PC-9 (cell line): ENCODE measurements at regions of chrX and their contacts with region 1.

Region 1: GRCh38 chrX:129522184-129523078 is 859 bp downstream of the SMARCA1 start:
- DNase-seq: peak; percentile 79 to 88
- H3K4me3 ChIP-seq: peak overlapping the region; percentile 94
- H3K27ac ChIP-seq: peak overlapping the region; percentile 52
- H3K4me1 ChIP-seq: peaks cover 9% of the 10 kb centered on the region
- H3K27me3 ChIP-seq: no peaks in the 10 kb centered on the region
- CTCF ChIP-seq: peak; percentile 35; the same call in 1 of the 2 replicates

Region 2: GRCh38 chrX:128769495-128769894 is 752.9 kb before region 1 on chrX:
- CTCF ChIA-PET with region 1: no interaction called
- POLR2A ChIA-PET with region 1: no interaction called
- intact Hi-C with region 1: no loop called
- DNase-seq: no peak
- H3K4me3 ChIP-seq: no peak overlapping the region
- H3K27ac ChIP-seq: no peak overlapping the region
- H3K4me1 ChIP-seq: no peaks in the 10 kb centered on the region
- H3K27me3 ChIP-seq: no peaks in the 10 kb centered on the region
- CTCF ChIP-seq: no peak

Region 3: DNA sequence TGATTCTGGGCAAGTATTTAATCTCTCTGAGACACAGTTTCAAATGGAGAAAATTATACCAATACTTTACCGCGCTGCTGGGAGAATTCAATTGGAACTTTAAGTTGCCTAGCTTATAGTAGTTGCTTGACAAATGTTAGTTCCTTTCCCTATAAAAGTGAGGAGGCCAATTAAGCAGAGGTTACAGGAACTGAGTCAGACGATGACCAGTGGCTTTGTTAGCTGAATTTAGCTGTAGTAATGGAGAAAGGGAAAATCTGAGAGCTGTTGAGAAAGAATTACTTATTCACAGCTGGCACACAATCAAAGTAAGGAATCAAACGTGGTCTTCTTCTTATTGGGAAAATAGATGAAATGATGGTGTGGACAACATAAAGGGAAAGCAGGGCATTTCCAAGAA is 28.8 kb before region 1 on chrX:
- CTCF ChIA-PET with region 1: no interaction called
- POLR2A ChIA-PET with region 1: interaction called, 15 read pairs
- intact Hi-C with region 1: no loop called
- DNase-seq: no peak
- H3K4me3 ChIP-seq: no peak overlapping the region
- H3K27ac ChIP-seq: no peak overlapping the region
- H3K4me1 ChIP-seq: no peaks in the 10 kb centered on the region
- H3K27me3 ChIP-seq: no peaks in the 10 kb centered on the region
- CTCF ChIP-seq: no peak

Region 4: GRCh38 chrX:129540068-129540653 is 17.7 kb after region 1 on chrX and contains the start of gene OCRL:
- CTCF ChIA-PET with region 1: interaction called, 8 read pairs
- POLR2A ChIA-PET with region 1: no interaction called
- intact Hi-C with region 1: loop called (anchors 1 kb)
- DNase-seq: peak; percentile 57 to 79
- H3K4me3 ChIP-seq: peak within 1 kb of the TSS; percentile 70
- H3K27ac ChIP-seq: no peak within 1 kb of the TSS; the same call in 1 of the 2 replicates
- H3K4me1 ChIP-seq: peaks cover 11% of the 10 kb centered on the region
- H3K27me3 ChIP-seq: no peaks in the 10 kb centered on the region
- CTCF ChIP-seq: peak; percentile 85
- total RNA-seq, gene OCRL: 40.3 and 41.4 TPM in 2 replicates

Region 5: GRCh38 chrX:129553619-129554288 is 31.3 kb after region 1 on chrX:
- CTCF ChIA-PET with region 1: no interaction called
- POLR2A ChIA-PET with region 1: interaction called, 10 read pairs
- intact Hi-C with region 1: no loop called
- DNase-seq: no peak
- H3K4me3 ChIP-seq: no peak overlapping the region
- H3K27ac ChIP-seq: no peak overlapping the region
- H3K4me1 ChIP-seq: no peaks in the 10 kb centered on the region
- H3K27me3 ChIP-seq: no peaks in the 10 kb centered on the region
- CTCF ChIP-seq: no peak

Region 6: GRCh38 chrX:129667412-129667811 is 145.0 kb after region 1 on chrX:
- CTCF ChIA-PET with region 1: no interaction called
- POLR2A ChIA-PET with region 1: no interaction called
- intact Hi-C with region 1: no loop called
- DNase-seq: no peak
- H3K4me3 ChIP-seq: no peak overlapping the region
- H3K27ac ChIP-seq: peak overlapping the region; percentile 56; the same call in 1 of the 2 replicates
- H3K4me1 ChIP-seq: peaks cover 27% of the 10 kb centered on the region
- H3K27me3 ChIP-seq: no peaks in the 10 kb centered on the region
- CTCF ChIP-seq: no peak

Region 7: DNA sequence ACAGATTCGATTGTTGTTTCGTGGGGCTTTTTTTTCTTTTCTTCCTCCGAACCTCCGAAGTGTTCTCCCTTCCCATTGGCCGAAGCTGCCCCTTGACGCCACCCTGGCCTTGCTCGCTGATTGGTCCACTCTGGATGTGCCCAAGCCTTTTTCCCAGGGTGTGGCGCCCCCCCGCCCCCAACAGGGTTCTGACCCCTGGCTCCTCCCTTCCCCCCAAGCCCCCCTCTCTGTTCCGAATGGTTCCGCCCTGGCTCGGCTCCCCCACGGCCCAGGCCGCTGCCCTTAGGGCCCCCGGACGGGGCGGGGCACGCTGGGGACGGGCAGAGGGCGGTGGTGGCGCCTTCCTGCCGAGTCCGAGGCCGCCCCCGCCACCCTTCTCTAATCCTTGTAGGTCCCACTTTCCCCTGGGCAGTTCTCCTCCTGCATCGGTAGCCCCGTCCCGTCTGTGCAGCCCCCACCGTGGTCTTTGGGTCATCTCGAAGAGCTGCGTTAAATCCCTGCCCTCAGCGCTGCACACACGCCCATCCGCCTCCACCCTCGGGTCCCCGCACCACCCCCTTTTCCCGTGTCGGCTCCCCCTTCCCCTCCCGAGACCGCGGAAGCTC is 409.1 kb after region 1 on chrX:
- CTCF ChIA-PET with region 1: no interaction called
- POLR2A ChIA-PET with region 1: no interaction called
- intact Hi-C with region 1: no loop called
- DNase-seq: peak; percentile 46 to 73
- H3K4me3 ChIP-seq: peak overlapping the region; percentile 85
- H3K27ac ChIP-seq: no peak overlapping the region
- H3K4me1 ChIP-seq: no peaks in the 10 kb centered on the region
- H3K27me3 ChIP-seq: peaks cover 18% of the 10 kb centered on the region
- CTCF ChIP-seq: no peak

Region 8: DNA sequence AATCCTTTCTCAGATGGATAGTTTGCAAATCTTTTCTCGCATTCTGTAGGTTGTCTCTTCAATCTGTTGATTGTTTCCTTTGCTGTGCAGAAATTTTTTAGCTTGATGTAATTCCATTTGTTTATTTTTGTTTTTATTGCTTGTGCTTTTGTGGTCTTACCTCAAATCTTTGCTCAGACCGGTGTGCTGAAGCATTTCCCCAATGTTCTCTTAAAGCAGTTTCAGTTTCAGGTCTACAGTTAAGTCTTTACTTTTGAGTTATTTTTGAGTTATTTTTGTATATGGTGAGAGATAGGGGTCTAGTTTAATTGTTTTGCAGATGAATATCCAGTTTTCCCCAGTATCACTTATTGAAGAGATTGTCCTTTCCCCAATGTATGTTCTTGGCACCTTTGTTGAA is 799.1 kb after region 1 on chrX:
- CTCF ChIA-PET with region 1: no interaction called
- POLR2A ChIA-PET with region 1: no interaction called
- intact Hi-C with region 1: no loop called
- DNase-seq: no peak
- H3K4me3 ChIP-seq: no peak overlapping the region
- H3K27ac ChIP-seq: no peak overlapping the region
- H3K4me1 ChIP-seq: no peaks in the 10 kb centered on the region
- H3K27me3 ChIP-seq: no peaks in the 10 kb centered on the region; the same call in 1 of the 2 replicates
- CTCF ChIP-seq: no peak

Region 9: DNA sequence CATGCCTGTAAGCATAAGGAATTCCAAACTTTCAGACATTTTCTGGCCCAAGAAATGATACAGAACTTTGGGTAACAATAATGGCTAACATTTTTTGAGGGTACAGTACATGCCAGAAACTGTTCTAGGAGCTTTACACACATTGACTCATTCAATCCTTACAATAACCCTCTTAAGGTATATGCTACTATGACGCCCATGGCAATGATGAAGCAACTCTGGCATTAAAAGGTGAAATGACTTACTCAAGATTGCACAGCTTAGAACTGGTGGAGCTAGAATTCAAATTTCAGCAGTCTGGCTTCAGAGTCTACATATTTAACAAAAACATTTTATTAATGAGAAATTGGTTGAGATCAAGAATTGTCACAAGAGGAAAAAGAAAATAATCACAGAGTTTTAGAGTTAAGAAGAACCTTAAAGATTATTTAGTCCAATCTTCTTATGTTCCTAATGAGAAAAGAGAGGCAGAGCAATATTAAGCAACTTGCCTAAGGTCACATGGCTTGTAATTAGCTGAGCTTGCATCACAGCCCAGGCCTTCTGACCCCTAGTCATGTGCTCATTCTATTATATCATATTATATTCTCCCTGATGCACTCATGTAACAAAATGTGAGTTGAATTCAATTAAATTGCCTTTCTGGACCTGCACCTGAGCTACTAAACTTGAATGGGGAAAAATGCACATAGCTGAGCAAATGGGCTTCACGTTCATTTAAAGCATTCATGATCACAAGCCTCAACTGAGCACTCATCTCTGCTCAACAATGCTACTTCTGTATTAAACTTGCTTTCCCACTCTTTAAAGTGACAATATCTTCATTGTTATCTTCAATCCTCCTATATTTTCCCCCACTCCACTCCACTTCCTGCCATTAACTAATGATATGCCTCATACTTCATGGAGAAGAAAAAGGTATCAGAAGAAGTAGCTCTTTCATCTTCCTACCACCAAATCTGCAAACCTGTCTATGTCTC is 1307.4 kb after region 1 on chrX:
- CTCF ChIA-PET with region 1: no interaction called
- POLR2A ChIA-PET with region 1: interaction called, 16 read pairs
- intact Hi-C with region 1: no loop called
- DNase-seq: peak in 1 of 2 experiments; percentile 74
- H3K4me3 ChIP-seq: no peak overlapping the region
- H3K27ac ChIP-seq: peak overlapping the region; percentile 51
- H3K4me1 ChIP-seq: peaks cover 14% of the 10 kb centered on the region
- H3K27me3 ChIP-seq: no peaks in the 10 kb centered on the region
- CTCF ChIP-seq: no peak